ENCODE measurements at regions of chr4 and their contacts with region 1.

Region 1: DNA sequence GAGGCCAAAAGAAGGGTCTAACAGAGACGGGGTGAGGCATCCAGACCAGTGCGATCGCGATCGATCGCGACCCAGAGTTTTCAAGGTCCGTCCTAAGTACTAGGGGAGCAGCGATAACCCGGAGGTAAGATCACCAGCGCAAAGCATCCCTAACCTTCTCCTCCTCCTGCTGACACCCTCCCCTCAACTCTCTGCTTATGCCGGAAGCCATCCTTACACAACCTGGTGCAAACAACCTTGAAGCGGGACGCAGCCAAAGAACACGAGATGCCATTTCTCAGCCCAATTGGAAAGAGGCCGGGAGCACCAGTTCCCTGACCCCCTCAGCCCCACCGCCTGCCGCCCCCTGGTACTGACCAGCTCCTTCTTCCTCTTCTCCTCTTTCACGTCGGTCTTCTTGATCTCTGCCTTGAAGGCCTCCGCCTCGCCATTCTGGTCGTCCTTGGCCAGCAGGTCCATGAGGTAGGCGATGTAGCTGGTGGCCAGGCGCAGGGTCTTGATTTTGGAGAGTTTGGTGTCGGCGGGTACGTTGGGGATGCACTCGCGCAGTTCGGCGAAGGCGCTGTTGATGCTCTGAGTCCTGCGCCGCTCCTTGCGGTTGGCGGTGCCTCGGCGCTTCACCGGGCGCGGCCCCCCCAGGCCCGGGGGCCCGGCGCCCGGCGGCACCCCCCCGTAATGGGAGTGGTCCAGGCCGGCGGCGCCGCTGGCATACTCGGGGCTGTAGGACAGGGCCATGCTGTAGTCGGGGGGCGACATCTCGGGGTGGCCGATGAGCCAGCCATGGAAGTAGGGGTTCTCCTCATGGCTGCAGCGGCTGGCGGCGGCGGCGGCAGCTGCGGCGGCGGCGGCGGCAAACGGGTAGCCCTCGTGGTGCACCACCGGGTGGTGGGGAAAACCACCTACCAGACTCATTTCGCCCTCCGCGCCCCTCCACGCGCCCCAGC is 1.4 kb downstream of the HAND2 start:
- DNase-seq: no peak
- H3K4me3 Mint-ChIP-seq: no peak overlapping the region
- H3K27ac Mint-ChIP-seq: peak overlapping the region; percentile 77
- H3K4me1 Mint-ChIP-seq: peaks cover 16% of the 10 kb centered on the region
- H3K27me3 Mint-ChIP-seq: peaks cover 82% of the 10 kb centered on the region

Region 2: DNA sequence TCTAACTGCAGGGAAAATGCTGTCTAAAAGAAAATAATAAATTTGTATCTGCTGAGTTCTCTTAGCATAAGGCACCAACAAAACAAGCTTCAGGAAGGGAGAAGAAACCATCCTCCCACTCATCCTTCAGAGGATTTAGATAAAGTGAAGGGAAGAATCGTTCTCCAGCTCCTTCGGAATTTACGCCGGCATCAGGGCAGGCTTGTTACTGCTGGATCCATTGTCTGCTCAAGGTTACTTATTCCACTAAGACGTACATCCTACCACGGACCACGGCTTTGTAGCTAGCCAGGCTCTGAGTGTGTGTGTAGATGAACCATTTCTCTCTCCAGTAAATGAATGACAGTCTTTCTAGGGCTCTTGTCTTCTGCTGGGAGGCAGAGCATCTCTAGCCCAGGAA is 59.0 kb before region 1 on chr4:
- intact Hi-C with region 1: no loop called
- DNase-seq: no peak
- H3K4me3 Mint-ChIP-seq: no peak overlapping the region
- H3K27ac Mint-ChIP-seq: no peak overlapping the region
- H3K4me1 Mint-ChIP-seq: no peaks in the 10 kb centered on the region
- H3K27me3 Mint-ChIP-seq: peaks cover 16% of the 10 kb centered on the region

Region 3: GRCh38 chr4:173505924-173506518 is 22.6 kb before region 1 on chr4:
- intact Hi-C with region 1: loop called (anchors 1 kb)
- DNase-seq: no peak
- H3K4me3 Mint-ChIP-seq: no peak overlapping the region
- H3K27ac Mint-ChIP-seq: no peak overlapping the region
- H3K4me1 Mint-ChIP-seq: peaks cover 17% of the 10 kb centered on the region
- H3K27me3 Mint-ChIP-seq: peaks cover 81% of the 10 kb centered on the region

Region 4: DNA sequence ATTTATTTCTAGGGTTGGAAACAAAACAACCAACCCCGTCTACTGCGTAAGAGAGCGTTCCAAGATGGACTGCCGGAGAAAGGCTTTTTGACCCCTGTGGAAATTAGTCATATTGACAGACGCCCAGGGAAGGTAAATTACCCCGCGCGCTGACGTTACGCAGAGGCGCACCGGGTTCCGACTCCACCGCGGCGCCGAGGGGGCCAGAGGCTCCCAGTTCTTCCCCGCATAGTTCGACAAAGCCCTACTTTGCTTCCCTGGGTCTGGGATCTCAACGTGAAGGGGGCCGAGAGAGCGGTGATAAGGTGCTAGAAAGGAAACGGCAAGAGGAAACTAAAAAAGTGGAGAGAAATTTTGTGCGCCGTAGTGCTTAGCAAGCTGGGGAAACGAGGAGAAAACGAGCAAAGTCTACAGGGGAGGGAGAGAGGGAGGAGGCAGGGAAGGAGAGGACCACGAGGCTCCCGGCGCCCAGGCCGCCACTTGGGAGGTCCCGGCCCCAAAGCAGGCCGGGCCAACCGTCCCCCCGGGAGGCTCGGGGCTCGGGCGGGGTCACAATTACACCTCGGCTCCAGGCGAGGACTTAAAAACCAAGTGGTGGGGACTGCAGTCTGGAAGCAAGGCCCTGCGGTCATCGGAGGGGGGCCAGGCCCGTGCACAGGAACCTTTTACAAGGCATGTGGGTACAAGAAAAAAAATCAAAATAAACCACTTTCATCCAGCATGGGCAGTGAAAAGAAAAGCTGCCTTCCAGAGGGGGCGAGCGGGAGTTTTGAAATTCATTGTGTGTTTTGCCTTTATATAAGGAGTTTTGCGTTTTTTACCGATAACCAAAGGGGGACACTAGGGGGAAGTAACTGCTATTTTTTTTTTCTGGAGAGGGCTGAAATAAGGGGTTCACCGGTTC is 11.8 kb before region 1 on chr4:
- intact Hi-C with region 1: loop called (anchors 1 kb)
- DNase-seq: no peak
- H3K4me3 Mint-ChIP-seq: no peak overlapping the region
- H3K27ac Mint-ChIP-seq: peak overlapping the region; percentile 73
- H3K4me1 Mint-ChIP-seq: no peaks in the 10 kb centered on the region
- H3K27me3 Mint-ChIP-seq: peaks cover 84% of the 10 kb centered on the region